Dendritic cell treated with granulocyte-macrophage colony-stimulating factor and Interleukin-4, amounts not matched to agents 40 ng/mL and 50 ng/mL, for 4 days (primary cell): ENCODE measurements at regions of chr18 and their contacts with region 1.

Region 1: DNA sequence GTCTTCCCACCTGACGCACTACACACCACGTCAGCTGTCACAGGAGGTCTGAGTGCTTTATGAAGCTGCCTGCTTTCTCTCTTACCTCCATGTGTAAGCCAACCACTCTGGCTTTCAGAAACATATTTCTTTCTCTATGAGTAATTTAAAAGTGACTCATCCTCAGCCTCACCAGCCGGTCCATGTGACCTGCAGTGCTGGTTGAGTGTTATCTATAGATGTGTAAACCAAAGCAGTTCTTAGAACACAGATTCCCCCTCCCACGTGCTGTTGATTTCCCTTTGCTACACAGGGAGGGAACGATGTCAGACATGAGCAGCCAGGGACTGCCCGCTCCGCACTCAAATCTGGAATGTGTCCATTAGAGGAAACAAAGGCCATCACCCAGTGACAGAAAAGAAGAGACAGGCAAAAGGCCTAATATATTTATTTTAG is 157.8 kb downstream of the BCL2 start:
- H3K4me3 Mint-ChIP-seq: no peak overlapping the region
- H3K27ac Mint-ChIP-seq: peak overlapping the region; percentile 88
- H3K4me1 Mint-ChIP-seq: peaks cover 53% of the 10 kb centered on the region
- H3K27me3 Mint-ChIP-seq: peaks cover under 1% of the 10 kb centered on the region

Region 2: DNA sequence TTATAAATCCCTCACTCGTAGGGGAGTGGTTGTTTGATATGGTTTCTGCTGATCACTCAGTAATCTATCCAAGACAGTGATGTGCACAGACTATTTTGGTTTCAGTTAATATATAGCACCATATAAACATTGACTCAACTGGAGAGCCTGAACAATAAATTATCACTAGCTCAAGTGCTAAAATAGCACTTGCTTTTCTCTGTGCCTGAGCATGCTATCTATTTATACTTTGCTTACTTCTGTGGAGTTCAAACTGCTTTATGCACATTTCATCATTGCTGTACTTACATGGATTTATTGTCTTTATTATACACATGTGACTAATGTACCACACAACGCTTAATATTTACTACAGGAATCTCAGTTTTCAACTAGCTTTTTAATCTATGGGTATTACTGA is 24.2 kb after region 1 on chr18:
- intact Hi-C with region 1: loop called (anchors 2 kb)
- H3K4me3 Mint-ChIP-seq: no peak overlapping the region
- H3K27ac Mint-ChIP-seq: no peak overlapping the region
- H3K4me1 Mint-ChIP-seq: peaks cover 35% of the 10 kb centered on the region
- H3K27me3 Mint-ChIP-seq: peaks cover 4% of the 10 kb centered on the region

Region 3: GRCh38 chr18:63199743-63200241 is 38.0 kb after region 1 on chr18:
- intact Hi-C with region 1: loop called (anchors 5 kb)
- H3K4me3 Mint-ChIP-seq: no peak overlapping the region
- H3K27ac Mint-ChIP-seq: no peak overlapping the region
- H3K4me1 Mint-ChIP-seq: no peaks in the 10 kb centered on the region
- H3K27me3 Mint-ChIP-seq: no peaks in the 10 kb centered on the region

Region 4: DNA sequence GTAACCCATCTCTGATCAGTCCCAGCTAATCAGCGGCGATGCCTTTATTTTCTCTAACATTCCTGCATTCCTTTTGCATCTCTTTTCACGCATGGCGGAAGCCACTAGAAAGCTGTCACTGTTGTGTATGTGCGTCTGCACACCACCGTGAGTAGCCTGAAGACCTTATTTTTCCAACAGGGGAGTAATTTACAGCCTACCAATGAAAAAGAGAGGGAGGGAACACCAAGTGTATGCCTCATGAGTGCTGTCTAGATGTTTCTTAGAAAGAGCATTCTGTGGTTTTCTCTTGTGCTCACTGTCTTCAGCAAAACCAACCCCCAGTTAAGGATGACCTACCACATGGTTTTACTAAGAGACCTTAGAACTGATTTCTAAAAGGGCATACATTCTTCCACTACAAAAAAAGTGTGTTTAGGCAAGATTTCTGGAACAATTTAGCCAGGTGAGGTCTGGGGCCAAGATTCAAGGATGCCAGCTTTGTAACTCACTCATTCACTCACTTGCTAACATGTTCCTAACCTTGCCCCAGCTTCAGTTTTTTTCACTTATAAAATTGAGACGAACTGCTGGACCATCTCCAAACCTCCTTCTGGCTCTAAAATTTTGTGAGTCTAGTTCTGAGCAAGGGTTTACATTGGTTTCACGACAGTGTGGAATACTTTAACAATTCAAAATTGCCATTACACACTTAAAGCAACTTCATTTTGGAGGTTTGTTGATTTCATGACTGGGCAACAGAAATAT is 106.4 kb after region 1 on chr18:
- intact Hi-C with region 1: no loop called
- H3K4me3 Mint-ChIP-seq: no peak overlapping the region
- H3K27ac Mint-ChIP-seq: no peak overlapping the region
- H3K4me1 Mint-ChIP-seq: peaks cover 29% of the 10 kb centered on the region
- H3K27me3 Mint-ChIP-seq: no peaks in the 10 kb centered on the region